ENCODE measurements at regions of chr6 and their contacts with region 1.

Region 1: DNA sequence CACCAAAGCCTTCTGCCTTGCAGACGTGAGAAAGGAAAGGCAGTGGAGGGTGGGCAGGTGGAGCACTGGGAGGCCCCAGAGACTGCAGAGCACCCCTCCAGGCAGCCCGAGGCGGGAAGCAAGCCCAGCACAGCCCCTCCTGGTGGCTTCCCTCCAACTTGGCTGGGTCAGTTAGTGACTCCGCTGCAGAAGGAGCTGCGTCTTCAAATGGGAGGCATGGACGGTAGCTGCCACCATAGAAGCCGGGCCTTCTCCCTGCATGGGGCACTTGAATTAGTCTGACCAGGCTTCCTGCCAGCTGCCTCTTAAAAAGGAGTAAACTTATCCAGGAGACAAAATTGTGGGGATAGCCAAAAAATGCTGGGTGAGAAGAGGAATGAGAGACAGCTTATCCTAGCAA is 88.0 kb upstream of the RPS6KA2 start:
- DNase-seq: no peak
- H3K4me3 ChIP-seq: no peak overlapping the region
- H3K27ac ChIP-seq: no peak overlapping the region
- H3K4me1 ChIP-seq: no peaks in the 10 kb centered on the region
- H3K27me3 ChIP-seq: no peaks in the 10 kb centered on the region
- CTCF ChIP-seq: peak; percentile 42 to 55 (median 45)
- EP300 ChIP-seq: no peak
- POLR2A ChIP-seq: no peak
- RAD21 ChIP-seq: peak; percentile 8 to 46; a peak in 2 of 4 replicates

Region 2: DNA sequence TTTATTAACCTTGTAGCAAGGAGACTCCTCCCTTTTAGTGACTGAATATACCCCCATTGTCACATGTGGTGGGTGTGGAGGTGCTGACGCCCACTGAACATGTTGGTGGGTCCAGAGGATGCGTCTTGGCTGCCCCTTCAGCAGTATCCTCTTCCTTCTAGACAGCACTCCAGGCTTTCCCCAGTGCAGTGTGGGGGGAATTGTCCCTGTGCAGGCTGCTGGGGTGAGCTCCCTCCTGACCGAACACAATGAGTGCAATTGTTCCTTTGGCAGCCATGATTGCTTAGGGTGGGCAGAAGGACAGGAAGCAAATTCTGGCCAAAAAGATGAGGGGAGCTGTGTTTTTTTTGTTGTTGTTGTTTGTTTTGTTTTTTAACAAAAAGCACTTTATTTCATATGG is 842.8 kb before region 1 on chr6:
- CTCF ChIA-PET with region 1: no interaction called
- POLR2A ChIA-PET with region 1: no interaction called
- DNase-seq: no peak
- H3K4me3 ChIP-seq: no peak overlapping the region
- H3K27ac ChIP-seq: no peak overlapping the region
- H3K4me1 ChIP-seq: no peaks in the 10 kb centered on the region
- H3K27me3 ChIP-seq: no peaks in the 10 kb centered on the region; a peak in 1 of 7 replicates
- CTCF ChIP-seq: no peak
- EP300 ChIP-seq: no peak
- POLR2A ChIP-seq: no peak
- RAD21 ChIP-seq: no peak

Region 3: GRCh38 chr6:166693880-166694279 is 21.2 kb before region 1 on chr6:
- CTCF ChIA-PET with region 1: interaction called, 11 read pairs
- POLR2A ChIA-PET with region 1: no interaction called
- DNase-seq: no peak
- H3K4me3 ChIP-seq: no peak overlapping the region
- H3K27ac ChIP-seq: no peak overlapping the region
- H3K4me1 ChIP-seq: no peaks in the 10 kb centered on the region; a peak in 1 of 7 replicates
- H3K27me3 ChIP-seq: peaks cover 0 to 3% (median 0%) of the 10 kb centered on the region in 4 experiments; a peak in 1 of 7 replicates
- CTCF ChIP-seq: no peak
- EP300 ChIP-seq: no peak
- POLR2A ChIP-seq: no peak
- RAD21 ChIP-seq: no peak

Region 4: DNA sequence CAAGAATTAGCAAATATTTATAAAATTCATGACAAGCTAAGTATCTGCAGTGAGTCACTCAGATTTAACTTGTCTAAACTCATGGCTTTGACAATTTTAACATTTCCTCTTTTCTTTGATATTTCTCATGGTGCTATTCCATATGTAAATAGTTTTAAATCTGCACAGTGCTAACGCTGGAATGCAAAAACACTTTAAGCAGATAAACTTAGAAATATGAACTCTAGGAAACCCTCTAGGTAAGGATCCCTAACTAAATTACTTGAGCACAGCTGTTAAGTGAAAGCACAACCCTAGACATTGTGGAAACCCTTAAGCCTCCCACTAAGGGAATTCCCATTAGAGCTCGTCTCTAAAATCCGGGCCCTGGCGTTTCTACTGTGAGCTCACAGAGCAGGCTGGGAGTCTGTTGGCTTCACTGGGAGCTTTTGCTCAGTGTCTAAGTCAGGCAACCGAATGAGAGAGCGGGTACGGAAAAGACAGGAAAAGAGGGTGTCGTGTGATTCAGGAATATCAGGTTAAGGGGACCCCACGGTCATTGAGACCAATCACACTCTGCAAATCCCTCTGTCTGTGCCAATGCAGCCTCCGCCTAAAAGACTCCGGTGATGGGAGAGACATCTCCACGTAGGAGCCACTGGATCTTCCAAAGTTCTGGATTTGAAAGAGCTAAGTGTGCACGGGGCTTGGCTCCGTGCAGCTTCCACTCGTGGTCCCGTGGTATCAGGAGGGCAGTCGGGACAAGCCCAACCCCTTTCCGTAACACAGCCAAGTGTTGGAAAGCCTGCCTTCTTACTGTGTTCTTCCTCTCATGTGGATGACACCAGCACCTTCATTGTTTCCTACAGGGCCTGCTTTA is 24.3 kb after region 1 on chr6:
- CTCF ChIA-PET with region 1: interaction called, 12 read pairs
- POLR2A ChIA-PET with region 1: no interaction called
- DNase-seq: peak in 1 of 2 experiments; percentile 37
- H3K4me3 ChIP-seq: no peak overlapping the region
- H3K27ac ChIP-seq: no peak overlapping the region
- H3K4me1 ChIP-seq: peaks cover 0 to 6% (median 1%) of the 10 kb centered on the region in 4 experiments; a peak in 2 of 7 replicates
- H3K27me3 ChIP-seq: no peaks in the 10 kb centered on the region
- CTCF ChIP-seq: no peak
- EP300 ChIP-seq: no peak
- POLR2A ChIP-seq: no peak
- RAD21 ChIP-seq: no peak

Region 5: DNA sequence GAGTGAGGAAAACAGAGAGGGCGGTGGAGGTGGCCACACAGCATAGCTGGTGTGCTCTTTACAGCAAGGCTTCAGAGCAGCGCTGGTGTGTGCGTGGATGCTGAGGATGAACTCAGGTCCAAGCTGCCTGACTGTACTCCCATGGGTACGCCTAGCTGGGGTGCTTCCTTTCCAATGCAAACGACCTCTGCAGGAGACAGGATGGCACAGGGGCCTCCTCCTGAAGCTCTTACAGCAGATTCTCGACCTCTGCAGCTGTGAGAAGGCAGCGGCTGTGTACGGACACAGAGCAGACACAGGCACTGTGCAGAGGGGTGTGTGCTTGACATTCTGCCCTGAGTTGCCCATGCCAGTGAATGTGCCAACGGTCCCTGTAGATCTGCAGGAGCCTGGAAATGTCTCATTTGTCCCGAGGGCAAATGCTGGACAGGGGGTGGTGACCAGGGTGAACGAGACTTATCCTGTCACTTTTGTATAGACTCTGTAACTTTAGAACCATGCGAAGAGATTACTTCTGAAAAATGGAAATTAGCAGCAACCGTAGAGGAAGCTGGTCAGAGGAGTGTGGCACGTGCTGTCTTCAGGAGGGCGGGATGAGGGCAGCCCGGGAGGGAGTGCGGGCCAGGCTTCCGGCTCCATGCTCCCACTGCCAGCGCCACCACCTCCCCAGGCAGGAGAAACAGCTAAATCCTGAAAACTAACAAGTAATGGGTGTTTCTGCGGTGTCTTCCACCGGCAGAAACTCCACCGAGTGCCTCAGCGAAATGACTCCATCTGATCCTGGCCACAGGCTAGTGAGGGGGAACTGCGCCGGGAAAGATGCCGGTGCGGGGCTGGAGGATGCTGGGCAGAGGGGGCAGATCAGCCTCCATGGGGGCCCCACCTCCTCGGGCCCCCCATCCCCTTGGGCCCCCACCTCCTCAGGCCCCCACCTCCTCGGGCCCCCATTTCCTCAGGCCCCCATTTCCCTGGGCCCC is 32.9 kb after region 1 on chr6:
- CTCF ChIA-PET with region 1: interaction called, 11 read pairs
- POLR2A ChIA-PET with region 1: no interaction called
- DNase-seq: peak in 1 of 2 experiments; percentile 47
- H3K4me3 ChIP-seq: 0 out of 8 replicates have a peak overlapping the region, but pooled peaks of 1 of the 4 experiments have one; percentile 7
- H3K27ac ChIP-seq: no peak overlapping the region
- H3K4me1 ChIP-seq: peaks cover 0 to 28% (median 11%) of the 10 kb centered on the region in 4 experiments; a peak in 6 of 7 replicates
- H3K27me3 ChIP-seq: no peaks in the 10 kb centered on the region
- CTCF ChIP-seq: no peak
- EP300 ChIP-seq: no peak
- POLR2A ChIP-seq: no peak
- RAD21 ChIP-seq: no peak

Region 6: GRCh38 chr6:166767230-166767629 is 52.2 kb after region 1 on chr6:
- CTCF ChIA-PET with region 1: interaction called, 75 read pairs
- POLR2A ChIA-PET with region 1: no interaction called
- DNase-seq: peak in 1 of 2 experiments; percentile 46
- H3K4me3 ChIP-seq: no peak overlapping the region
- H3K27ac ChIP-seq: 0 out of 2 replicates have a peak overlapping the region, but pooled peaks have one; percentile 14
- H3K4me1 ChIP-seq: peaks cover 5 to 28% (median 22%) of the 10 kb centered on the region in 4 experiments
- H3K27me3 ChIP-seq: no peaks in the 10 kb centered on the region
- CTCF ChIP-seq: no peak
- EP300 ChIP-seq: no peak
- POLR2A ChIP-seq: no peak
- RAD21 ChIP-seq: no peak